Aorta (tissue), 5 donors: ENCODE measurements at regions of chr17 and their contacts with region 1.

Region 1: GRCh38 chr17:73304971-73305812 is 6.6 kb downstream of the CDC42EP4 start:
- DNase-seq: peak; percentile 85 to 88
- ATAC-seq: peak; percentile 74
- H3K4me3 ChIP-seq: peak overlapping the region in 1 of 2 donors; percentile 0
- H3K27ac ChIP-seq: peak overlapping the region; percentile 88 to 98
- H3K4me1 ChIP-seq: peaks cover 3 to 6% of the 10 kb centered on the region in 2 donors
- H3K27me3 ChIP-seq: no peaks in the 10 kb centered on the region

Region 2: DNA sequence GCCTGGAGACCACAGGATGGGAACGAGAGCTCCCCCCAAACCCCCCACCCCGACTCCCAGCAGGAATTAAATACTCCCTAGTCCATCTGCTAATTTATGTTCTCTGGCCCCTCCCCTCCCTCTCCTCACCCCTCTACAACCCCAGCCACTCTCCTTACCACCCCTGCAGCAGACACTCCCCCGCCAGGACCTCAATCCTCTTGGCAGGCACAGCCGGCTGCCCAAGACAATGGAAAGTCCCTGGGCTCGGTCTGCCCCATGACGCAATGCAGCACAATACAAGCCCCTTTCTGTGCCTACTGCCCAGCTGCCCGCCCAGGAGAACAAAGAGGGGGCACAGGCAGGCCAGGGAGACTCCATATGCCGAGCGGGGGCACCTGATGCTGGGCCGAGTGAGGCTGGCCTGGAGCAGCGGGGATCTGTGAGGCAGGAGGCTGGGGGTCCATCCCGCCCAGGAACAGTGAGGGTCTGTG is 36.9 kb after region 1 on chr17:
- intact Hi-C with region 1: loop called in 1 of 2 experiments (anchors 5 kb)
- DNase-seq: peak; percentile 87 to 88
- ATAC-seq: peak; percentile 63
- H3K4me3 ChIP-seq: no peak overlapping the region
- H3K27ac ChIP-seq: no peak overlapping the region
- H3K4me1 ChIP-seq: no peaks in the 10 kb centered on the region
- H3K27me3 ChIP-seq: no peaks in the 10 kb centered on the region